ENCODE measurements at regions of chr22 and their contacts with region 1.

Region 1: DNA sequence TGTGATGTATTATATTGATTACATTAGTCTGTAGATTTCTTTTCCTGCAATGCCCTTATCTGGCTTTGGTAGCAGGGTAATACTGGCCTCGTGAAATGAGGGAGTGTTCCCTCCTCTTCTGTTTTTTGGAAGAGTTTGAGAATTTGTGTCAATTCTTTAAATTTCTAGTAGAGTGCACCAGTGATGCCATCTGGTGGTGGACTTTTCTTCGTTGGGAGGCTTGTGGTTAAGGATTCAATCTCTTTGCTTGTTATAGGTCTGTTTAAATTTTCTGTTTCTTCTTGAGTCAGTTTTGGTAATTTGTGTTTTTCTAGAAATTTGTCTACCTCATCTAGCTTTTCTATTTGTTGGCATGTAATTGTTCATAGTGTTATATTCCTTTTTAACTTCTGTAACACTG is 18.9 kb downstream of the SHANK3 start:
- DNase-seq: no peak
- ATAC-seq: 0 out of 2 replicates have a peak, but pooled peaks have one; percentile 42
- H3K4me3 ChIP-seq: no peak overlapping the region
- H3K27ac ChIP-seq: no peak overlapping the region
- H3K4me1 ChIP-seq: no peaks in the 10 kb centered on the region
- H3K27me3 ChIP-seq: no peaks in the 10 kb centered on the region
- CTCF ChIP-seq: peak; percentile 69; the same call in 1 of the 2 replicates

Region 2: GRCh38 chr22:50361688-50362087 is 329.8 kb before region 1 on chr22:
- CTCF ChIA-PET with region 1: no interaction called
- POLR2A ChIA-PET with region 1: no interaction called
- in situ Hi-C with region 1: no loop called
- intact Hi-C with region 1: no loop called
- DNase-seq: no peak
- ATAC-seq: no peak
- H3K4me3 ChIP-seq: no peak overlapping the region
- H3K27ac ChIP-seq: no peak overlapping the region
- H3K4me1 ChIP-seq: peaks cover 5% of the 10 kb centered on the region
- H3K27me3 ChIP-seq: no peaks in the 10 kb centered on the region
- CTCF ChIP-seq: no peak

Region 3: GRCh38 chr22:50531962-50532674 is 159.4 kb before region 1 on chr22:
- CTCF ChIA-PET with region 1: no interaction called
- POLR2A ChIA-PET with region 1: interaction called, 15 read pairs
- in situ Hi-C with region 1: no loop called
- intact Hi-C with region 1: no loop called
- DNase-seq: no peak
- ATAC-seq: peak; percentile 54
- H3K4me3 ChIP-seq: peak overlapping the region; percentile 56 to 79
- H3K27ac ChIP-seq: peak overlapping the region; percentile 57
- H3K4me1 ChIP-seq: peaks cover 6% of the 10 kb centered on the region
- H3K27me3 ChIP-seq: no peaks in the 10 kb centered on the region
- CTCF ChIP-seq: no peak

Measured in Panc1 (cell line).